ENCODE measurements at regions of chr22 and their contacts with region 1.

Region 1: GRCh38 chr22:50200461-50201190 is at the start of gene SELENOO:
- DNase-seq: peak; percentile 80

Region 2: DNA sequence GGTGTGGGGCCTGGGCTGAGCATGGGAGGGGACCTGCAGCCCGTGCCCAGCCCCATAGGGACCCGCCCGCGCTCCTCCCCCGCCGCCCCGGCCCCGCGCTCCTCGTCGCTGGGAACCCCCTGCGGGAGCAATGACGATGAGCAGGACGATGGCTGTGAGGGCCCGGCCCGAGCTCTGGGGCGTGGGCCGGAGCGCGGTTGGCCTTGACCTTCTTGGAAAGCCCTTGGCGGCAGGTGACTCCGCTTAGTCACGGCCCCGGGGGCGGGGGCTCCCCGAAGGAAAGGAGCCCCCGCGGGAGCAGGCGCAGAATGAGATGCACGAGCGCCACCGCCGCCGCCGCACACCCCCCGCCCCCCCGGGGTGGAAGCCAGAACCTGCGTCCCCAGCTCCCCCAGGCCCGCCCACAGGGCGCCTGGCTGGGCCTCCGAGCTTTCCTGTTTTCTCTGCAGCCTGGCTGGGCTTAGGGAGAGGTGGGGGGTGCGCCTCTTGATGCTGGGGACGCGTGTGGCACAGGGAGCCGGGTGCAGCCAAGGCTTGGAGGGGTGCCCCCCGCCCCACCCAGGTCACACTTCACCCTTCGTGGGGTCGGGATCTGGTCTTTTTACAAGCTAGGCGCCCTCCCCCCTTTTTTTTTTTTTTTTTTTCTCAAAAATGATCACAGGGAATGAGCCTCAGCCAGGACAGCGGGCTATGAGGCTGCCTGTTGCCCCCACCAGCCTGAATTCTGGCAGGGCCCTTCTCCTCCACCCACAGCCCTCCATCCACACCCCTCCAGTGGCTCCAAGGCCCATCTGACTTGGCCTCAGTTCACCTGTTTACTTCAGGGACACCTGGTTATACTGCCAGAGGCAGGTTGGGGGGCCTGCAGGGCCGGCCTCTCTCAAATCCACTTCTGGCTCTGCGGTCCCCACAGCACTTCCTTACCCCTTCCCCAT is 264.3 kb before region 1 on chr22:
- in situ Hi-C with region 1: loop called (anchors 10 kb)
- DNase-seq: peak; percentile 85

Region 3: GRCh38 chr22:50157709-50158375 is 42.8 kb before region 1 on chr22:
- in situ Hi-C with region 1: loop called (anchors 10 kb)
- DNase-seq: no peak

Measured in KBM-7 (cell line).